ENCODE measurements at regions of chr2 and their contacts with region 1.

Region 1: GRCh38 chr2:68909793-68910674 is 38.8 kb upstream of the BMP10 start:
- DNase-seq: peak in 1 of 2 donors; percentile 24
- ATAC-seq: no peak
- H3K4me3 ChIP-seq: no peak overlapping the region
- H3K27ac ChIP-seq: no peak overlapping the region
- H3K4me1 ChIP-seq: peaks cover 8 to 10% of the 10 kb centered on the region in 2 donors
- H3K27me3 ChIP-seq: no peaks in the 10 kb centered on the region
- CTCF ChIP-seq: peak; percentile 43 to 73 (median 59)
- POLR2A ChIP-seq: no peak

Region 2: DNA sequence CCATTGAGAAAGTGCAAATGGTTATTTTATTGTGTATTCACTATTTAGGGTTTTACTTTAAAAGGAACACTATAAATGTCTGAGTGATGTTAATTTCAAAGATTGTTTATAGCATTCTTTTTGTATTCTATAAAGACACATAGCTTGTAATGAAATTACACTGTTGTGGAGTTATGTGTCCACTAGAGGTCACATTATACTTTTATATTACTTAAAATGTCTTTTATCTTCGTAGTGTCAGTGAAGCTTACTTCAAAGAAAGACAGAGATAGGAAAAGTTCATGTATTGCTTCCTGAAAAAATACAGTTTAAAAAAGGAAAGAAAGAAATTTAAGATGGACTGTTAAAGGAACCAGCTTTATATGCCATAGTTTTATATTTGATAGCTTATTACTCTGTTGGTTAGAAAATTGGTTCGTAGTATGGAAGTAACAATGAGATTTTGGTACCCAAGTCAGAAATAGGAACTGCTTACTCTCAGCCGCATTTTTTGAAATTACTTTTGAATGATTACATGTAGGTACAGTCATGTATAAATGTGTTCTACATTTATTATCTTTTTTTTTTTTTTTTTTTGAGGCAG is 422.2 kb before region 1 on chr2:
- in situ Hi-C with region 1: loop called in 2 of 4 experiments (anchors 10 to 25 kb)
- intact Hi-C with region 1: no loop called
- DNase-seq: no peak
- ATAC-seq: no peak
- H3K4me3 ChIP-seq: no peak overlapping the region
- H3K27ac ChIP-seq: no peak overlapping the region
- H3K4me1 ChIP-seq: no peaks in the 10 kb centered on the region
- H3K27me3 ChIP-seq: no peaks in the 10 kb centered on the region
- CTCF ChIP-seq: peak in 3 of 5 experiments; percentile 18 to 45 (median 33)
- POLR2A ChIP-seq: no peak

Region 3: DNA sequence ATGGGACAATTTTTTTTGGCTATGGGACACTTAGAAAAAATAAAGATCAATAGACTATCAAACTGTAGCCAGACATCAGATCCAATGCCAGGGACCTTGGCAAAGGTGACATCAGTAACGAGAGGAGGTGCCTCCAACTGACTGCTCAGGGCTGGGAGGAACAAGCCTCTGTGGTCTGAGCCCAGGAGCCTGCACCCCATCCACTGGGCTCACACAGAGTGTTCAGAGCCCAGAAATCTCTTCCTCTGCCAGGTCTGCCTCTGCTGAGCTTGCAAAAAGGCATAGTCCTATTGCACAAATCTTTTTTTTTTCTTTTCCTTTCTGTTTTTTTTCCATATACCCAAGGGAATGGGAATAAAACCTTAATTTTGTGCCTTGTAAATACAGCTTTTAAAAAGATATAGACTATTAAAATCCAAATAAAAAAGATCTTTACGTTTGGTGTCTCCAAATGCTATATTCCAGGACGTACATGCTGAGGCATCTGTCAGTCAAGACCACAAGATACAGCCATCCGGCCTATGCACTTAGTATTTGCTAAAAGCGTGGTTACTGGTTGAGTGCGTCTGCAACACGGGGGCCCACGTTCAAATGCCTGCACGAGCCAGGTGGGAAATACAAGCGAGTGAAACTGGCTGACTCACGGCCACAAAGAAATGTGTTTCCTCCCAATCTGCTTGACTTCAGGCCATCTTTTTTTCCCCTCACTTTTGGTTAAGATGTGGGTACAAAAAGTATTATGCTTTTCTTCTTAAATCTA is 183.2 kb before region 1 on chr2:
- in situ Hi-C with region 1: loop called in 1 of 4 experiments (anchors 25 kb)
- intact Hi-C with region 1: no loop called
- DNase-seq: peak in 1 of 2 donors; percentile 14
- ATAC-seq: no peak
- H3K4me3 ChIP-seq: no peak overlapping the region
- H3K27ac ChIP-seq: no peak overlapping the region
- H3K4me1 ChIP-seq: no peaks in the 10 kb centered on the region
- H3K27me3 ChIP-seq: no peaks in the 10 kb centered on the region
- CTCF ChIP-seq: no peak
- POLR2A ChIP-seq: no peak

Region 4: DNA sequence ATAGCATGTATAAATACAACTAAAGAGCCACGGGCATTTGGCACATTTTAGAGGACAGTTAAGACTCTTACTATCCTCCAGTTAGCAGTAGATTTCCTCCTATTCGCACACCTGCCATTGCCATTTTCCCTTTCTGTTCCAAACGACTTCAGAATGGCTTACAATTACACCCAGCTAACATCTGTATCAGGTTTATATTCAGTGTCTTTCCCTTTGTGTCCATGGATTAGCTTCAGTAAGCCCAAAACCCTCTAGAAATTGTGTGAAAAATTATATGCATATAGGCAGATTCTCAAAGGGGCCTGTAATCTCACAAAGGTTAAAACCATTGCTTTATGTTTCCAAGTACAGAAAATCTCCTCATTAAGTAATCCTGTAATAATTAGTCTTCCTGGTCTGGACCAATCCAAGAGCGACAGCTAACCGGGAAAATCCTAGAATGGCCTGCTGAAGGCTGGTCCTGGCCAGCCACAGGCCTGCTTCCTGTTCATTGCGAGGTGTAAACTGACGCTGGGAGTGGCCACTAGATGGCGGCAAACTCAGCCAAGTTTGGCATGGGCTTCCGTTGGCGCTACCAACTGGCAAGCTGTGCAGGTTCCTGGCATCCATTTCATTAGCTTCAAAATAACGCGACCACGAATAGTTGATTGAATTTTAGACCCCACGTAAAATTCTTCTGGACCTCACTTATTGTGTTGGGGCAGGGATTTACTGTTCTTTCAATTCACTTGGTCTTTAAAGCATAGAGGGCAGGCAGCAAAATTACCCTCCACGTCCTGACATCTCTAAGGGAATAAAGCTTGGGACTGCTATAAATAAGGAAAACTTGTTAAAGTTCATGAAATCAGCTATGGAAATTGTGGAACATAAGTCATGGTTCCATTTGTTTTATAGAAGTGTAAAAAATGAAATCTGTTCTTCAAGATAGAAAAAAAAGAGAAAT is 158.4 kb before region 1 on chr2:
- in situ Hi-C with region 1: loop called in 2 of 4 experiments (anchors 5 to 25 kb)
- intact Hi-C with region 1: loop called (anchors 5 kb)
- DNase-seq: peak; percentile 62 to 65
- ATAC-seq: peak; percentile 87 to 90
- H3K4me3 ChIP-seq: no peak overlapping the region
- H3K27ac ChIP-seq: no peak overlapping the region
- H3K4me1 ChIP-seq: peaks cover 4 to 10% of the 10 kb centered on the region in 2 donors
- H3K27me3 ChIP-seq: no peaks in the 10 kb centered on the region
- CTCF ChIP-seq: peak; percentile 63 to 91 (median 78)
- POLR2A ChIP-seq: no peak

Region 5: GRCh38 chr2:68832233-68832869 is 77.7 kb before region 1 on chr2:
- in situ Hi-C with region 1: no loop called
- intact Hi-C with region 1: loop called (anchors 10 kb)
- DNase-seq: peak; percentile 31 to 47
- ATAC-seq: peak; percentile 57 to 67
- H3K4me3 ChIP-seq: no peak overlapping the region
- H3K27ac ChIP-seq: peak overlapping the region; percentile 72 to 78 (median 74)
- H3K4me1 ChIP-seq: peaks cover 26 to 38% of the 10 kb centered on the region in 2 donors
- H3K27me3 ChIP-seq: no peaks in the 10 kb centered on the region
- CTCF ChIP-seq: no peak
- POLR2A ChIP-seq: peak; percentile 17 to 32